Right ventricle myocardium superior (tissue), 1 donor: ENCODE measurements at regions of chr2 and their contacts with region 1.

Region 1: DNA sequence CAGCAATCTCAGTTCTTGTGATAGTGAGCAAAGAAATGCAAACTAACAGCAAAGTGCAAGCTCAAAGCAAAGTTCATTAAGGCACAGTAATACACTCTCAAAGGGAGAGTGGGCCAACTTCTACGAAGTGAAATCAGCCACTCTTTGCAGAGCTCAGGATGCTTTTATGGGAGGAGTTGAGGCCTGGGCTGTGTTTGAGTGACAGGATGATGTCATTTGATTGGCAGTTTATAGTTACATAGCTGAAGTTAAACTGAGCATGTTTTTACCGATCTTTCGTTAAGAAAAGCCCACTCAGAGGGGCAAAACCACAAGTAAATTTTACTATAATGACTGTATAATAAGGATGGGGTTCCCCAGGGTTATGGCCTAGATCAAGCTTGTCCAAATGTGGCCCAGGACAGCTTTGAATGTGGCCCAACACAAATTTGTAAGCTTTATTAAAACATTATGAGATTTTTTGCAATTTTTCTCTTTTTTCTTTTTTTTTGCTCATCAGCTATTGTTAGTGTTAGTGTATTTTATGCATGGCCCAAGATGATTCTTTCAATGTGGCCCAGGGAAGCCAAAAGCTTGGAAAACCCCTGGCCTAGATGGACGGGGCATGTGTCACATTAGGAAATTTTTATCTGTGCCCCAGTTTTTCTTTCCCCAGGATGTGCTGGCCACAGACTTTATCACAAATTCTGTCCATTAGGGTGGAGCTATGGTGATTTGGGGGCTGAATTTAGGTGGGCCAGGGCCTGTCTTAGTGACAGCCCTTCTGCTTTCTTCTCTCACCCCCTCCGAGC is 8.3 kb upstream of the DNAH7 start:
- DNase-seq: no peak
- ATAC-seq: no peak

Region 2: GRCh38 chr2:196113061-196113974 is 36.3 kb after region 1 on chr2:
- intact Hi-C with region 1: no loop called
- DNase-seq: no peak
- ATAC-seq: peak; percentile 60

Region 3: DNA sequence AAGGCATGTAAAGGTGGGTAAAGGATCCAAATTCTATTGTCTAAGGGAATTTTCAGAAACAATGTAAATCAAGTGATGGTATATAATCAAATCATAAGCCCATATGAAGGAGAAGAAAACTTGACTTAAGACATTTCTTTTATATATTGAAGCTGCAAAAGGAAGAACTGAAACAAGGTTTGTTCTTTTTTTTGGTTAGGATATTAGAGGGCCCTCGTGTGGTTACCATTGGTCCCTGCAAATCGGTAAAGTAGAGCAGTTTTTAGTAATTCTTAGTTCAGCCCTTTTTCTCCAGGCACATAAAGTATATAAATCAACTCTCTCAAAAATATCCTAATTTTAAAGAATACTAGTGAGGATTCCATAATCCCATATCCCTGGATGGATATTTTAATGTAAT is 200.0 kb after region 1 on chr2:
- intact Hi-C with region 1: loop called (anchors 10 kb)
- DNase-seq: no peak
- ATAC-seq: peak; percentile 30

Region 4: GRCh38 chr2:196453613-196454047 is 376.7 kb after region 1 on chr2:
- intact Hi-C with region 1: loop called (anchors 10 kb)
- DNase-seq: no peak
- ATAC-seq: peak; percentile 75

Region 5: DNA sequence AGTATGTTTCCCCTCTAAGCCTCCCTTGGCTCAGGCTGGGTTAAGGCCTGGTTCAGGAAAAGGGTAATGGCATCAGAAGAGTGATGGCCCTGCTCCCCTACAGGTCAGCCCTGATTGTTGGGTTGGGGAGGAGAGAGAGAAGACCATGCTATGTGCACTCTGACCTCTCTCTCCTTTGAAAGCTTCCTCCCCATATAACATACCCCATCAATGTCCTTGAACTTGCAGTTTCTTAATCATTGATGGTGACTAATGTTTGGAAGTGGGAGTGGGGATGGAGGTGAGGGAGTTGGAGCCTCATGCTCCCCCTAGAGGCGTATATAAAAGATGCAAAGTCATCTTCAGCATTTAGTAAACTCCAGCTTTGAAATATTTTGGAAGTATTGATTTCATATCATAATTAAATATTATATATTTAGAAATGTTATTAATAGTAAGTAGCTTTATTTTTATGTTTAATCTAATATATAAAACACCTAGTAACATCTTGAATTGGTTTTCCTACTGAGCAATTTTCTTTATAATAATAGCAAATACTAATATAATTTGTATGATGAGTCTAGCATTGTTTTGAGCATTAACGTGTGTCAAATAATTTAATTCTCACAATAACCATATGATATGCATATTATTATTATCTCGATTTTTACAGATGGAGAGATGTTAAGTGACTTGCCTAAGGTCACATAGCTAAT is 1736.3 kb after region 1 on chr2:
- intact Hi-C with region 1: no loop called
- DNase-seq: no peak
- ATAC-seq: no peak